Activated naive CD4-positive, alpha-beta T cell treated with anti-CD3 and anti-CD28 coated beads for 36 hours (primary cell): ENCODE measurements at regions of chr10 and their contacts with region 1.

Region 1: GRCh38 chr10:102072673-102073527 is 7.8 kb downstream of the HPS6 start:
- DNase-seq: peak; percentile 90
- H3K4me3 Mint-ChIP-seq: no peak overlapping the region
- H3K27ac Mint-ChIP-seq: no peak overlapping the region
- H3K4me1 Mint-ChIP-seq: no peaks in the 10 kb centered on the region
- H3K27me3 Mint-ChIP-seq: no peaks in the 10 kb centered on the region

Region 2: GRCh38 chr10:101830322-101831168 is 242.4 kb before region 1 on chr10:
- CTCF ChIA-PET with region 1: interaction called, 17 read pairs
- intact Hi-C with region 1: no loop called
- DNase-seq: peak; percentile 88
- H3K4me3 Mint-ChIP-seq: peak overlapping the region; percentile 72
- H3K27ac Mint-ChIP-seq: peak overlapping the region; percentile 84
- H3K4me1 Mint-ChIP-seq: peaks cover 48% of the 10 kb centered on the region
- H3K27me3 Mint-ChIP-seq: no peaks in the 10 kb centered on the region

Region 3: DNA sequence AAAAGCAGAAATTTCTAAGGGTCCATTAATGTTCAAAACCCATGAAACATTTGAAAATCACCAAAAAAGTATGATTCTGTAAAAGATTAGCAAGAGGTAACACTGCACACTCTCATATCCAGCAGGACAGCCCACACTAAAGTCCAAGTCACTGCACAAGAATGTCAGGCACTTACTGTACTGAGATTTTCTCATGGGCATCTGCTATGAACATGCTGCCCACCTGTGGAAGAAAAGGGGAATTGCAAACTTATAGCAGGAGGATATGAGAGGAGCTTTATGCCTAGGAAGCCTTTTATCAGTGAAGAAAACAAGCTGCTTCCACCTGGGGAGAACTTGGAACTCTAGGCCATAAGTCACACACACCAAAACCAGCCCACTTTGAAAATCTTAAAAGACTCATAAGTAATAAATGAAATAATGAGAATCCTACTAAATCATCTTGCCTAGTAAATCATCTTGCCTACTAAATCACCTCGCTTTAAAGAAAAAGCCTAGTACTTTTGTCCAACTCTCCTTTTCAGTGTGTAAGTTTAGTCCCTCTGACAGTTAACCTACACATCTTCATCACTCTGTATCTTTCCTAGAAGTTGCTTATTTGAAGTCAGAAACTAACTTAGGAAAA is 63.0 kb before region 1 on chr10:
- CTCF ChIA-PET with region 1: interaction called, 25 read pairs
- intact Hi-C with region 1: loop called (anchors 1 kb)
- DNase-seq: peak; percentile 56
- H3K4me3 Mint-ChIP-seq: no peak overlapping the region
- H3K27ac Mint-ChIP-seq: no peak overlapping the region
- H3K4me1 Mint-ChIP-seq: peaks cover 2% of the 10 kb centered on the region
- H3K27me3 Mint-ChIP-seq: no peaks in the 10 kb centered on the region

Region 4: DNA sequence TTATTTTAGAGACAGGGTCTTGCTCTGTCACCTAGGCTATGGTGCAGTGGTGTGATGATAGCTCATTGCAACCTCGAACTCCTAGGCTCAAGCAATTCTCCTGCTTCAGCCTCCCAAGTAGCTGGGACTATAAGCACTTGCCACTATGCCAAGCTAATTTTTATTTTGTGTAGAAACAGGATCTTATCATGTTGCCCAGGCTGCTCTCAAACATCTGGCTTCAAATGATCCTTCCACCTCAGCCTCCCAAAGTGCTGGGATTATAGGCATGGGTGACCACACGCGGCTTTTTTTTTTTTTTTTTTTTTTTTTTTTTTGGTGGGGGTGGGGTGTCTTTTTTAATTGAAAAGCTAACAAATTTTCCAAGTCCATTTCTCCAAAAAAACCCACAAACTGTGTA is 10.6 kb after region 1 on chr10:
- CTCF ChIA-PET with region 1: interaction called, 37 read pairs
- intact Hi-C with region 1: no loop called
- DNase-seq: no peak
- H3K4me3 Mint-ChIP-seq: no peak overlapping the region
- H3K27ac Mint-ChIP-seq: no peak overlapping the region
- H3K4me1 Mint-ChIP-seq: no peaks in the 10 kb centered on the region
- H3K27me3 Mint-ChIP-seq: no peaks in the 10 kb centered on the region

Region 5: DNA sequence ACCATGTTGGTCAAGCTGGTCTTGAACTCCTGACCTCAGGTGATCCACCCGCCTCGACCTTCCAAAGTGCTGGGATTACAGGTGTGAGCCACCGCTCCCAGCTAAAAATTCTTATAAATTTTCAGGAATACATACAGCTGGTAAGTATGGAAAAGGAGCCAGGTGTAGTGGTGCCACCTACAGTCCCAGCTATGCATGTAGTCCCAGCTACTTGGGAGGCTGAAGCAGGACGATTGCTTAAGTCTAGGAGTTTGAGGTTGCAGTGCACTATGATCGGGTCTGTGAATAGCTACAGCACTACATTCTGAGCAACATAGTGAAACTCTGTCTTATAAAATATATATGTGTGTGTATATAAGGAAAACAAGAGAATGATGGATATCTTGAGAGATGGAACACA is 28.3 kb after region 1 on chr10:
- CTCF ChIA-PET with region 1: interaction called, 17 read pairs
- intact Hi-C with region 1: no loop called
- DNase-seq: no peak
- H3K4me3 Mint-ChIP-seq: no peak overlapping the region
- H3K27ac Mint-ChIP-seq: no peak overlapping the region
- H3K4me1 Mint-ChIP-seq: peaks cover 5% of the 10 kb centered on the region
- H3K27me3 Mint-ChIP-seq: no peaks in the 10 kb centered on the region

Region 6: GRCh38 chr10:102322914-102323313 is 250.0 kb after region 1 on chr10:
- CTCF ChIA-PET with region 1: no interaction called
- intact Hi-C with region 1: no loop called
- DNase-seq: peak; percentile 43
- H3K4me3 Mint-ChIP-seq: no peak overlapping the region
- H3K27ac Mint-ChIP-seq: no peak overlapping the region
- H3K4me1 Mint-ChIP-seq: peaks cover 17% of the 10 kb centered on the region
- H3K27me3 Mint-ChIP-seq: no peaks in the 10 kb centered on the region